Tibial artery (tissue), 4 donors: ENCODE measurements at regions of chr13 and their contacts with region 1.

Region 1: DNA sequence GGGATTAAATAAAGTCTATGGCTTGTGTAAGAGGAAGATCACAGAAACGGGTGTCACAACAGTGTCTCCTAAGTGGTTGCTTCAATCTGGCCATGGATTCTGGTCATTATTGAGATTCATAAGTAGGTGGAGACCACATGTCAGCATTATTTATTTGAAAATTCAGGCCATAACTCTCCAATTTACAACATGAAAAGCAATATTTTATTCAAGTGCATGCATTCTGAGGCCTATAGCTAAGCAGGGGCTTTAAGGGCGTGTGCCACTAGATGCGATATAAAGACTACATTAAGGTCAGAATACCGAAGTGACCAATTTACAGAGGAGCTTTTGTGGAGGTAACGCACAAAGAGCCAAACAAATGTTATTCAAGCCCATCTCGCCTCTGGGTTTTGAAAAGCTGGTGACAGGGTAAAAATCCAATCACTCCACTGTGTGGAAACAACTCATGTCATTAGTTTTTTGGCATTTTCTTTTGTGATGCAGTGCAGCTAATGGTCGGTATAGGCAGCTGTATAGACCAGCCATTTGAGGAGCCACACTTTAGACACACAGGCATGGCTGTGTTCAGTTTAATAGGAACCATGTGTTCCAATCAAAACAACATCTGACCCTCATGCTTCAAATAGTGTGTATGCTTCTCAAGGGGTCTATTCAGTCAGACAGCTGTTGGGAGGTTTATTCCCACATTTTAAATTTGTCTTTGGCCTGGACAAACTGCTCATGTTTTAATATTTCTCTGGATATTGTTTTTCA is 123.7 kb downstream of the KL start:
- DNase-seq: no peak
- H3K4me3 ChIP-seq: no peak overlapping the region
- H3K27ac ChIP-seq: peak overlapping the region in 1 of 2 donors; percentile 24
- H3K4me1 ChIP-seq: peaks cover 0 to 39% (median 25%) of the 10 kb centered on the region in 4 donors
- H3K27me3 ChIP-seq: no peaks in the 10 kb centered on the region
- CTCF ChIP-seq: no peak

Region 2: DNA sequence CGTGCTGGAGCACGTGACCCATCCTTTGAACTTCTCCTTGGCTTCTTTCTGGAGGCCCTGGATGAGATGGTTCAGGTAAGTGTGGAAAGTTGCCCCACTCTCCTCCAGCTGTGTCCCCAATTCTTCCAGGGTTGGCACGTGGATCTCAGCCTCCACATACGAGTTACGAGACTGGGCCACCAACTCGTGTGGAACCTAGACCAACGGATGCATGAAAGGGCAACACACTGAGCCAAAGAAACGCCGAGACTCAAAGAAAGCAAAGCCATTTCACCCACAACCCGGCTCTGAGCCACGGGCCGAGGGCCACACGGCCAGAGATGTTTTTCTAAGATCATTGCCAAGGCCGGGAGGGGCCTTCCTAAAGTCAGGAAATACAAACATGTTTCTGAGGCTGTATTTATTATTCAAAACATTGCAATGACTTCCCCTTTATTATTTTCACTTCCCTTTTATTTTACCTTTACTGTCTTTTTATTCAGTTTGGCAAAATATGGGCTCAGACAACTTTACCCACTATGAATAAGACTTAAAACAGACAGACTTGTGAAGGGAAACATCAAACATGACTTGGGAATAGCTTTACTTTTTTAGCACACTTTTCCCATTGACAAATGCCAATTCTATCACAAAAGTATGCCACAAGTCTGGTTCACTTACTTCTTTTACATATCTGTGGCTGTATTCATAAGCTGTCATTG is 29.1 kb before region 1 on chr13:
- intact Hi-C with region 1: no loop called
- DNase-seq: peak; percentile 67 to 87
- H3K4me3 ChIP-seq: no peak overlapping the region
- H3K27ac ChIP-seq: peak overlapping the region; percentile 50 to 79
- H3K4me1 ChIP-seq: peaks cover 0 to 61% (median 39%) of the 10 kb centered on the region in 4 donors
- H3K27me3 ChIP-seq: no peaks in the 10 kb centered on the region
- CTCF ChIP-seq: no peak

Region 3: DNA sequence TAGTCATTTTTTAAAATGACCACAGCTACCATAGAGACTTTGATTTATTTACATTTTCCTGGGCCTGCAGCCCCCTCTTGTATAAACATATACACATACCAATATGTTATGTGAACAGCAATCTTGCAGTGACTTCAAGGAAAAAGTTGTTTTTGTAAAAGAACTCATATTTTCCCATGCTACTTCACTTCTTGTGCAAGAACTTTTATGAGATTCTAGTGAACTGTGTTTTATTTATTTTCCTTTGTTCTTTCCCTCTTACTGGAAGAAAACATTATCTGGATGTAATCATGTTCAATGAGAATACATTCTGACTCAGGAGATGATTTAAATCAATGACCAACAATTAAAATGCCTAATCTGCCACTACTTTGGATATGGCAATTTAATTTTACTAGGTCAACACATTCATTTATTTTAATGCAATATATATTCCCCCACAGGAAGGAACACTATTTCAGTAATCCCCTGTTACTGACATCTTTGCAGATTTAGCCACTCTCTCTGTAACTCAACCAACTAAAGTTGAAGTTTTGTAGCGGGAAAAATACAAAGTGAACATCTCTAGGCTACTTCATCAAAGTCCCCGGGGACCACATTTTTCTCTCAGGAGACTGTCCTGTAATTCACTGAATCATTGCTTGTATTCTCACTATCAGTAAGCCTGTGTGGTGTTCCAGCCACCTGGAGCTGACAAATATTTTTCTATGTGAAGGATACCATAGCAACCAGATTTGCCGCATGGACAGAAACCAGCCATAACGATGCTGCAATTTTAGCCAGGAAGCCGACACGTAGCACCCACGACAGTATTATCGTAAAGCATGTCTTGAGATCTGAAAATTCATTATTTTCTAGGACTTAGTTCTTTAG is 55.1 kb after region 1 on chr13:
- intact Hi-C with region 1: loop called (anchors 5 kb)
- DNase-seq: no peak
- H3K4me3 ChIP-seq: peak overlapping the region in 1 of 2 donors; percentile 1
- H3K27ac ChIP-seq: peak overlapping the region; percentile 32 to 47
- H3K4me1 ChIP-seq: peaks cover 0 to 99% (median 46%) of the 10 kb centered on the region in 4 donors
- H3K27me3 ChIP-seq: no peaks in the 10 kb centered on the region
- CTCF ChIP-seq: no peak